ENCODE measurements at regions of chr9 and their contacts with region 1.

Region 1: DNA sequence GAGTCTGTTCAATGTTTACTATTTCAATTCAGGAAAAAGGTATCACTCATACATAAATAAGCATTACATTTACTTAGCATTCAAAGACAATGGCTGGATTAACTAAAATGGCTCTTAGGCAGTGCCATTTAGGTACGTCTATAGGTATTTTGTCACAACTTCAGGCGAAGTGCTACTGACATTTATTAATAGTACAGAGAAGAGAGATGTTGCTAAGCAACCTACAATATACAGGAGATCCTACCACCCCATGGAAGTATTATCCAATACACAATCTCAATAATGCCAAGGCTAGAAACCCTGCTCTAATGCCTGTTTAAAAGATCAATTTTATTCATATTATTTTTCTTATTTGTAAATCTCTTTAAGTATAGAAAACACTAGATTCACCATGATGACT is 76.0 kb downstream of the UBAP2 start:
- DNase-seq: no peak
- ATAC-seq: no peak
- H3K4me3 ChIP-seq: no peak overlapping the region
- H3K4me3 Mint-ChIP-seq: no peak overlapping the region
- H3K27ac ChIP-seq: no peak overlapping the region
- H3K27ac Mint-ChIP-seq: no peak overlapping the region
- H3K4me1 ChIP-seq: no peaks in the 10 kb centered on the region
- H3K4me1 Mint-ChIP-seq: no peaks in the 10 kb centered on the region
- H3K27me3 ChIP-seq: no peaks in the 10 kb centered on the region
- H3K27me3 Mint-ChIP-seq: no peaks in the 10 kb centered on the region

Region 2: DNA sequence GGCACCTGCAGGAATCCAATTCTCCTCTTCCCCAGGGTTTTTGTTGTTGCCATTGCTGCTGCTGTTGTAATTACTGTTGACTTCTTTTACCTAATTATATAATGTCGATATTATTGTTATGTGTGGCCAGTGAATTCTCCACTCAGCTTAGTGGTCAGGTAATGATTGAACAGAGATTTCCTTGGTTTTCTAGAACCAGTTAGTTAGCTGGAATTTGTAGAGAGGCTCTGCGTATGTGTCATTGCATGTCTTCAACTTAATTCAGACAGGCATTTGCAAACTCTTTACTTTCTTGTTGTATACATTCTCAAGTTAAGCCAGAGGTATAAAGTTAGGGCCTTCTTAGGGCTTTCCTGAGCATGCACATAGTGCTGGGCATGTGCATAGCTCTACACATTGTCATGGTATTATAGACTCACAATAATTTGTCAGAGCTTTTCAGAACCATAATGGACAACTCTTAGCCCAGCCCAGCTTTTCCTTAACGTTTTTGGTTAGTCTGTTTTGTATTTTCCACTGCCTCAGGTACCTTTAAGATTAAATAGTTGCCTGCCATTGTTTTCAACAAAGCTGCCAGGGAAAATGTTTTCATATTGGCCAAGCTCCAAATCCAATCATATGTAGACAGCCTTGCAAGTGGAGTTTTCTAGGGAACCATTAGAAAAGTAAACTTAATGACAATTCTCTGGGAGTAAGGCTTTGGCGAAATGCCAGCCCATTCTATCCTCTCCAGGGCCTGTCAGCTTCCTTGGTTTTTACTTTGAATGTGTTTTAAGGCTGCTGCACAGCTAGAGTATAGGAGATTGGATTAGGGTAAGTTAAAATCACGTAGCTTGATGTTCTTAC is 87.6 kb before region 1 on chr9:
- CTCF ChIA-PET with region 1: interaction called, 3 to 10 read pairs
- POLR2A ChIA-PET with region 1: no interaction called
- DNase-seq: no peak
- ATAC-seq: no peak
- H3K4me3 ChIP-seq: no peak overlapping the region
- H3K4me3 Mint-ChIP-seq: no peak overlapping the region
- H3K27ac ChIP-seq: no peak overlapping the region
- H3K27ac Mint-ChIP-seq: peak overlapping the region in 1 of 2 donors; percentile 16
- H3K4me1 ChIP-seq: peaks cover 0 to 13% of the 10 kb centered on the region in 2 experiments
- H3K4me1 Mint-ChIP-seq: peaks cover 37 to 48% (median 46%) of the 10 kb centered on the region in 3 donors
- H3K27me3 ChIP-seq: no peaks in the 10 kb centered on the region
- H3K27me3 Mint-ChIP-seq: no peaks in the 10 kb centered on the region

Region 3: GRCh38 chr9:34119713-34120112 is 147.0 kb after region 1 on chr9:
- CTCF ChIA-PET with region 1: no interaction called
- POLR2A ChIA-PET with region 1: interaction called in 1 of 2 experiments, 10 read pairs
- DNase-seq: no peak
- ATAC-seq: no peak
- H3K4me3 ChIP-seq: no peak overlapping the region
- H3K4me3 Mint-ChIP-seq: no peak overlapping the region
- H3K27ac ChIP-seq: no peak overlapping the region
- H3K27ac Mint-ChIP-seq: no peak overlapping the region
- H3K4me1 ChIP-seq: peaks cover 15 to 21% of the 10 kb centered on the region in 2 experiments
- H3K4me1 Mint-ChIP-seq: peaks cover 44 to 47% (median 46%) of the 10 kb centered on the region in 3 donors
- H3K27me3 ChIP-seq: no peaks in the 10 kb centered on the region
- H3K27me3 Mint-ChIP-seq: no peaks in the 10 kb centered on the region

Measured in T-cell (primary cell).